ENCODE measurements at regions of chr5 and their contacts with region 1.

Region 1: GRCh38 chr5:34898258-34898895 is 16.9 kb downstream of the RAD1 start:
- DNase-seq: peak in 4 of 5 donors; percentile 50 to 58 (median 52)
- ATAC-seq: peak in 3 of 4 donors; percentile 78 to 87 (median 79)
- H3K4me3 ChIP-seq: no peak overlapping the region
- H3K27ac ChIP-seq: no peak overlapping the region
- H3K4me1 ChIP-seq: no peaks in the 10 kb centered on the region
- H3K27me3 ChIP-seq: no peaks in the 10 kb centered on the region
- CTCF ChIP-seq: peak; percentile 70 to 94 (median 85)
- POLR2A ChIP-seq: no peak

Region 2: GRCh38 chr5:34474573-34475021 is 423.8 kb before region 1 on chr5:
- intact Hi-C with region 1: loop called in 2 of 10 experiments (anchors 1 to 5 kb)
- DNase-seq: no peak
- ATAC-seq: peak in 3 of 4 donors; percentile 45 to 70 (median 62)
- H3K4me3 ChIP-seq: no peak overlapping the region
- H3K27ac ChIP-seq: no peak overlapping the region
- H3K4me1 ChIP-seq: no peaks in the 10 kb centered on the region
- H3K27me3 ChIP-seq: peaks cover 0 to 6% (median 0%) of the 10 kb centered on the region in 9 donors
- CTCF ChIP-seq: peak; percentile 88 to 97 (median 92)
- POLR2A ChIP-seq: no peak

Region 3: DNA sequence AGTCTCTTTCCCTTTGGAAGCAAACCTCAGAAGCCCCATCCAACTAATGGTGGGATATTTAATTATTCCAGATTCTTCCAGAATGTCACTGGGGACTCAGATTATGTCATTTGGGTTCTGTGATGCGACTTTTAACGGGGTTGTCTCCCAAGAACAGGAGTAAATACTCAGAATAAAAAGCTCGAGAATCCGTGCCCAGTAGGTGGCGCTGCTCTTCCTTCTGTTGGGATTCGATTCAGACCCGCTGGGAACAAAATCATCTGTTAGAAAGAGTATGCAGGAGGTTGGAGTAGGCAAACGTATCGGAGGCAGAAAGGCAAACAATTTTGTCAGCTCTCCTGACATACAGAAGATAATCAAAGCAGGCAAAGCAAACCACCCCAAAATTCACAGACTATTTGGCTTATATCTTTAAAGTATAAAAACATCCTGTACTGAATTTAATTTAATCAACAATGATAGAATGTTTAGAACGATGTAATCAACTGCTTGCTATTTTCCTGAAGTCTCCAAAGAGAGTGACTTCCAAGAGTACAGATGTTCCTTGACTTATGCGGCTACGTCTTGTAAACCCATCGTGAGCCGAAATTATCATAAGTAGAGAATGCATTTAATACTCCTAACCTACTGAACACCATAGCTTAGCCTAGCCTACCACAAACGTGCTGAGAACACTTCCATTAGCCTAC is 412.1 kb before region 1 on chr5:
- intact Hi-C with region 1: loop called (anchors 1 to 5 kb)
- DNase-seq: peak; percentile 65 to 85 (median 76)
- ATAC-seq: peak; percentile 45 to 88 (median 70)
- H3K4me3 ChIP-seq: no peak overlapping the region
- H3K27ac ChIP-seq: peak overlapping the region in 1 of 12 donors; percentile 36
- H3K4me1 ChIP-seq: peaks cover 0 to 11% (median 1%) of the 10 kb centered on the region in 12 donors
- H3K27me3 ChIP-seq: peaks cover 0 to 4% (median 0%) of the 10 kb centered on the region in 9 donors
- CTCF ChIP-seq: peak; percentile 74 to 92 (median 85)
- POLR2A ChIP-seq: no peak

Region 4: GRCh38 chr5:34522599-34523386 is 375.6 kb before region 1 on chr5:
- intact Hi-C with region 1: loop called (anchors 1 to 5 kb)
- DNase-seq: peak in 4 of 5 donors; percentile 61 to 69 (median 66)
- ATAC-seq: peak; percentile 64 to 83 (median 71)
- H3K4me3 ChIP-seq: no peak overlapping the region
- H3K27ac ChIP-seq: no peak overlapping the region
- H3K4me1 ChIP-seq: peaks cover 0 to 14% (median 2%) of the 10 kb centered on the region in 12 donors
- H3K27me3 ChIP-seq: no peaks in the 10 kb centered on the region
- CTCF ChIP-seq: peak; percentile 67 to 88 (median 74)
- POLR2A ChIP-seq: no peak

Region 5: GRCh38 chr5:34838785-34839714 is 59.3 kb before region 1 on chr5 and contains the start of gene TTC23L:
- intact Hi-C with region 1: loop called in 1 of 10 experiments (anchors 10 kb)
- DNase-seq: peak; percentile 87 to 92 (median 90)
- ATAC-seq: peak; percentile 89 to 97 (median 94)
- H3K4me3 ChIP-seq: peak within 1 kb of the TSS; percentile 53 to 89 (median 70)
- H3K27ac ChIP-seq: peak within 1 kb of the TSS in 7 of 12 donors; percentile 5 to 65 (median 41)
- H3K4me1 ChIP-seq: peaks cover 0 to 15% (median 5%) of the 10 kb centered on the region in 12 donors
- H3K27me3 ChIP-seq: no peaks in the 10 kb centered on the region
- CTCF ChIP-seq: no peak
- POLR2A ChIP-seq: peak in 1 of 2 donors; percentile 32
- total RNA-seq, gene TTC23L: 0.69 TPM in 1 of 9 donors, not detected in the others

Region 6: DNA sequence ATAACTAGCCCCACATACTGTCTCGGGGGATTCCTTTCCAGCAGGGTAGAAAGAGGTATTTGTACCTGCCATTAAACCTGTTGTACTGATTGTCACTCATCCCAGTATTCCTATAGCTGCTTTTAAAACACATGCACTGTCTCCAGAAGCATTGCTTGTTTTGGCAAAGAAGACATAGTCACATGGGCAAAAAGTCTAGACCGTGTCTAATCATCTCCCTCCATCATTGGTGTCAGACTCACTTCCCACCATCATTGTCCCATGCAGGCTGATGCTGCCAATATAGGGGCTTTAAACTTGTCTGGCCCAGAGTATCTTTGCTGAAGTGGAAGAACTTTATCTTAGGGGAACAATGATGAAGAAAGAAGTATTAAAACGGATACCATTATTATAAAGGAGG is 43.6 kb after region 1 on chr5:
- intact Hi-C with region 1: no loop called
- DNase-seq: no peak
- ATAC-seq: no peak
- H3K4me3 ChIP-seq: no peak overlapping the region
- H3K27ac ChIP-seq: no peak overlapping the region
- H3K4me1 ChIP-seq: peaks cover 0 to 14% (median 2%) of the 10 kb centered on the region in 12 donors
- H3K27me3 ChIP-seq: no peaks in the 10 kb centered on the region
- CTCF ChIP-seq: no peak
- POLR2A ChIP-seq: no peak

Region 7: DNA sequence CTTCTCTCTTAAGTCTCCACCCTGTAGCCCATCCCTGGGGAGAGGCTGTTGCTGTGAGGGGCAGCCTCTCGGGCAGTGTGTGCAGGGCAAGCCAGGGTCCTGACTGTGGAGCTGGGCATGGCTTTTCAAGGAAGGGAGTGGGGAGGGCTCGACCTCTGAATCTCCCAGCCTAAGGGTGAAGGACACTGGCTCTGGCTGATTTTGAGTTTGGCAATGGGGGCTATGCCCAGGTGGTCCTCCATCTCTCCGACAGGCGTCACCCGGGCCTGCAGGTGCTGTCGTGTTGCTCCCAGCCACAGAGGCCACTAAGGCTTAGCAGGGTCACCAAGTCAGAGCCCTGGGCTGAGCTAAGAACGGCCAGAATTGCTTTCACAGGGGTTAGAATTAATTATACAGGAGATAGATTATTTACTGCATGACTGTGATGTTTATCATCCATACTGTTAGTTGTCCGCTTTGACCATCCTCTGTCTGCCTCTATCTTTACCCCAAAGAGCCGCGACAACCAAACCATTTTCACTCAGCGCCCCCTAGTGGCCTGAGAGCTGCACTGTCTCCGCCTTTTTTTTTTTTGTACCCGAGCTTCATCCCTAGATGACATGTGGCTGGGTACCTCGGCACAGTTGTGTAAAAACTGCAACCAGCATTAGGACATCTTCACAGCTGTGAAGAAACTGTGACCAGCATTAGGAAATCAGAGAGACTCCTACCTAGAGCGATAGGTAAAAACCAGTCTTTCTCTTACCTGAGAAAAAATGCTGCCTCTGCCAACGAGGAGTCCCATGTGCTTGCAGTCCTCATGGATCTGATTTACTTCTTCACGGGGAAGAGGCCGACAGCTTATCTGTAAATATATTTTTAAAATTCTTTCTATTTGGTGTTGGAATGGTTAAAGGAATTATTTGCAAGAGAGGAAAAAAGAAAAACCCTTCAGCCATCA is 104.9 kb after region 1 on chr5:
- intact Hi-C with region 1: no loop called
- DNase-seq: peak in 4 of 5 donors; percentile 28 to 49 (median 36)
- ATAC-seq: peak in 3 of 4 donors; percentile 50 to 66 (median 55)
- H3K4me3 ChIP-seq: no peak overlapping the region
- H3K27ac ChIP-seq: no peak overlapping the region
- H3K4me1 ChIP-seq: no peaks in the 10 kb centered on the region
- H3K27me3 ChIP-seq: peaks cover 0 to 19% (median 6%) of the 10 kb centered on the region in 9 donors
- CTCF ChIP-seq: peak; percentile 72 to 91 (median 82)
- POLR2A ChIP-seq: no peak